BJ (cell line): ENCODE measurements at regions of chr1 and their contacts with region 1.

Region 1: DNA sequence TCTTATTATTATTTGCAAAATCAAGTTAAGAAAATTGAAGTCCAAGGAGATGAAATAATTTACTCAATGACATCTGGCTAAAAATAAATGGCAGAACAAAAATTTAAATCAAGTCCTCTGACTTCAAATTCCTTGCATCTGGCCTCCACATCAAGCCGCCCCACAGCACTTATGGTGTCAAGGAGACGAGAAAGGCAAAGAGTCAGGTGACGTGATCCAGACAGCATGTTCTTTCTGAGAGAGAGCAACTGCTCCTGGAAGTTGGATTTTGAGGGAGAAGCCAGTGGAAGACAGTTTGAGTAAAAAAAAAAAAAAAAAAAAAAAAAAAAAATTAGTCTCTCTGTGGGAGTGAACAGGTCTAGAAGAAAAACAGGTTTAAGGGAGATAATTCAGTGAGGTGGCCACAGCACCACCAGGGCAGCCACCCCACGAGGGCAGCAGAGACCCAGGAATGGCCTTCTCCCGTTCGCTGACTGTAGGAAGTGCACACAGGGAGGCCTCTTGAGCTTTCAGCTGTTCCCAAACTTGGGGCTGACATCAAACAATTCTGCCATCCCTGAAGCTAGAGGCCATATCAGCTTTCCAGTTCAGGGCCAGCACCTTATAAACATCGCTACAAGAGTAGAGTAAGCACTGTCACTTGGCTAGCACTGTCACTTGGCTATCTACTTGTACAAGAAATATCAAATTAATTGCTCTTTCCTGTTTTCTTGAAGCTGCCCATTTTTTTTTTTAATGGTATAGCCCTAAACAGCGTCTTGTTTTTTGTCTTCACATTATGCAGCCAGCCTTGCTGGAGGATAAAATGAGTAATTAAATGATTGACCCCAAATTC is 7.8 kb downstream of the C1orf162 start:
- DNase-seq: no peak
- H3K4me3 ChIP-seq: no peak overlapping the region
- H3K27me3 ChIP-seq: no peaks in the 10 kb centered on the region
- CTCF ChIP-seq: peak; percentile 87

Region 2: GRCh38 chr1:111497592-111497991 is 16.0 kb after region 1 on chr1:
- CTCF ChIA-PET with region 1: interaction called, 10 read pairs
- POLR2A ChIA-PET with region 1: no interaction called
- DNase-seq: no peak
- H3K4me3 ChIP-seq: no peak overlapping the region
- H3K27me3 ChIP-seq: no peaks in the 10 kb centered on the region; the same call in 1 of the 2 replicates
- CTCF ChIP-seq: no peak

Region 3: DNA sequence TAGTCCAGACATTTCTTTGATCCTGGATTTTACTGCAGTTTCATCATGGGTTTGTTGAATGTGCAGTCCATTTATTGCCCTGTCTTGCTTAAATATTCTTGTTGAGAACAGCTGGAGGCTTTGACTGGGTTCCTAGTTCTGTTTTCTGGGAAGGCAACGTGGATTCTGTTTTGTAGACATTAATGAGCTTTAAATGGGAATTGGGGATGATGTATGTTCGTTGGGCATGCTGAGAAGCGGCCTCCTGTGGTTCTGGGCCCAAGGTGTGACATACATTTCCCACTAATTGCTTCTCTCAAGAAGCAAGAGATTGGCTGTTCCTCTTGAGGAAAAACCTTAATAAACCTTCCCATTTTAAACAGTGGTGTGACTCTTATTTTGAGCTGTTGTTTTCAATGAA is 234.7 kb after region 1 on chr1:
- CTCF ChIA-PET with region 1: interaction called, 10 read pairs
- POLR2A ChIA-PET with region 1: no interaction called
- DNase-seq: no peak
- H3K4me3 ChIP-seq: no peak overlapping the region
- H3K27me3 ChIP-seq: no peaks in the 10 kb centered on the region
- CTCF ChIP-seq: no peak

Region 4: GRCh38 chr1:111747282-111747734 is 265.7 kb after region 1 on chr1:
- CTCF ChIA-PET with region 1: interaction called, 12 read pairs
- POLR2A ChIA-PET with region 1: no interaction called
- DNase-seq: no peak
- H3K4me3 ChIP-seq: no peak overlapping the region
- H3K27me3 ChIP-seq: no peaks in the 10 kb centered on the region
- CTCF ChIP-seq: peak; percentile 61

Region 5: GRCh38 chr1:111755331-111756123 is 273.9 kb after region 1 on chr1 and contains the start of gene DDX20:
- CTCF ChIA-PET with region 1: interaction called, 12 read pairs
- POLR2A ChIA-PET with region 1: no interaction called
- DNase-seq: peak; percentile 86
- H3K4me3 ChIP-seq: peak within 1 kb of the TSS; percentile 90
- H3K27me3 ChIP-seq: no peaks in the 10 kb centered on the region
- CTCF ChIP-seq: peak; percentile 72
- polyA plus RNA-seq, gene DDX20: 6.9 and 12.9 TPM in 2 replicates

Region 6: GRCh38 chr1:111769517-111770146 is 288.0 kb after region 1 on chr1:
- CTCF ChIA-PET with region 1: interaction called, 50 read pairs
- POLR2A ChIA-PET with region 1: no interaction called
- DNase-seq: no peak
- H3K4me3 ChIP-seq: no peak overlapping the region
- H3K27me3 ChIP-seq: no peaks in the 10 kb centered on the region
- CTCF ChIP-seq: peak; percentile 74